ENCODE measurements at regions of chr6 and their contacts with region 1.

Region 1: DNA sequence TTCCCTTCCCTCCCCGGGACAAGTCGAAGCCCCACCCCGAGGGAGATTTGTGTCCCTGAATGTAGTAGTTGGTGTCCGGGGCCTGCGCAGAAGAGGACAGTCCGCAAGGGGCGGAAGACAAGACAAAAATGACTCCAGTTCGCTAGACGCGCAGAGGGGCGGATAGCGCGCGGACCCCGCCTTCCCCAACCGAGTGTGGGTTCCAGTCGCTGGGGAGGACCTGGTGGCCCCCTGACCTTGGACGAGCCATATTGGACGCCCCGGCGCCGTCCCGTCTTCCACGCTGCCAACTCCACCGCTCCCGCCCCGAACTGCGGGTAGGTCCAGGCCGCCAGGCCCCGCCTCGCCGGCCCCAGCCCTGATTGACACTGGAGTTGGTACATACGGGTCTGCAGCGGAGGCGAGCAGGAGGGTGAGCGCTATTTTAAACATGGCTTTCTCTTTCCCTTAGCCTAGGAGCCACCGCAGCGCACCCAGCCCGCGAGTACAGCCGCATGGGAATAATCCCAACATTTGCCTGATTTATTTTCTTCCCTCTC is 802 bp downstream of the HMGN3 start:
- DNase-seq: peak; percentile 93
- ATAC-seq: peak; percentile 95

Region 2: DNA sequence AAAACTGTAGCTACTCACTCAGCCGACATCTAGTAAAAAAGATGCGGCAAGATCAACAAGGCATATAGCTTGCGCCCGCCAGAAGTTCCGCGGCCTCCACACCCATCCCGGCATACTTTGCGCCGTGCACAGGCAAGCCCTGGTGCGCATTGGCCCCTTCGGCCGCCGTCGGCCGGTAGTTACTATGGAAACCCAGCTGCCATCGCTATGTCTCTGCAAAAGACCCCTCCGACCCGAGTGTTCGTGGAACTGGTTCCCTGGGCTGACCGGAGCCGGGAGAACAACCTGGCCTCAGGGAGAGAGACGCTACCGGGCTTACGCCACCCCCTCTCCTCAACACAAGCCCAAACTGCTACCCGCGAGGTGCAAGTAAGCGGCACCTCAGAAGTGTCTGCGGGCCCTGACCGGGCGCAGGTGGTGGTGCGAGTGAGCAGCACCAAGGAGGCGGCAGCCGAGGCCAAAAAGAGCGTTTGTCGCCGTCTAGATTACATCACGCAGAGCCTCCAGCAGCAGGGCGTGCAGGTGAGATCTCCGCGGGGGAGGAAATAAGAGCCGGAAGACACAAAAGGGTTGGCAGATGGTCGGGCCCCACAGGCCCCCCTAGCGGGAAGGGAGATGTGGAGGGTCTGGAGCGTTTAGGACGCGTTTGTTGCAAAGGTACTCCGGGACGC is 366.2 kb before region 1 on chr6 and contains the start of gene IRAK1BP1:
- intact Hi-C with region 1: loop called (anchors 10 kb)
- DNase-seq: peak; percentile 89
- ATAC-seq: peak; percentile 99
- total RNA-seq, gene IRAK1BP1: 3.5 TPM

Region 3: GRCh38 chr6:78936515-78936914 is 297.2 kb before region 1 on chr6:
- intact Hi-C with region 1: loop called (anchors 10 kb)
- DNase-seq: no peak
- ATAC-seq: peak; percentile 76

Region 4: DNA sequence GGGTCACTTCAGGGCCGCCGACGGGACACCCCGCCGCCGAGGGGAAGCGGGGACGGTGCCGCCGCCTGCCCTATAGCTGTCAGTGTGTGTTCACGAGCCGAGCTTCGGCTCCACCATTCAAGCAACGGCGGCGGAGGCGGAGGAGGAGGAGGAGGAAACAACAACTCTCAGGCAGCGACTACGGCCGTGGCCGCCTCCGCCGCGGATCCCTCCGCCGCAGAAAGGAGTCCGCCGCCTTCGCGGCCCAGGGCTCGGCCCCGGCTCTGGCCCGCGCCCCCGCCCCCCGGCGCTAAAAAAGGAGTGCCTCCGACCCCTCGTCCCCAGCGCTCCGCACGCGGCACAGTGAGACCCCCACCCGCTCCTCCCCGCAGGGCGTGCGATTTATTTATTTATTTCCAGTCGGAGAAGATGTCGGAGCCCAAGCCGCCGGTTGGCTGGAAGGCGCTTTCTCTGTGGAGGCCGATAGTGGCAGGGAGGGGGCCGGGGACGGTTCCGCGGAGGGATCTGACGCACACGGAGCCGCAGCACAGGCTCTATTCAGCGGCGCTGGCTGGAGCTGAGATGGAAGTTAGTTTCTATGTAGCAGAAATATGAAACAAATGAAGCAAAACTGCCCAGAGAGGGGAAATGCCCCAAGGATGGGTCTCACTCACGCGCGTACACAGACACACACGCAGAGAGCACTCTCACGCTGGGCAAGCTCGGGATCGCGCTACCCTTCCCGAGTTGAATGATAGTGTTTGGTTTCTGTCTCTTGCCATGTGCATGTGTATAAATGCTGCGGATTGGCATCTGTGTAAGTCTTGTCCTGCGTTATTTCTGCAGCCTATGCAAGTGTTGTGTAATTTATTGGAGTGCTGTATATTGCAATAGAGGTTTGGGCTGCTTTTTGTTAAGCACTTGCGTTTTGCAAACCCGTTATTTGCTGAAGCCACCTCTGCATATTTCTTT is 155.3 kb before region 1 on chr6 and contains the start of gene PHIP:
- intact Hi-C with region 1: loop called (anchors 1 kb)
- DNase-seq: peak; percentile 97
- ATAC-seq: peak; percentile 95
- total RNA-seq, gene PHIP: 13.8 TPM

Region 5: DNA sequence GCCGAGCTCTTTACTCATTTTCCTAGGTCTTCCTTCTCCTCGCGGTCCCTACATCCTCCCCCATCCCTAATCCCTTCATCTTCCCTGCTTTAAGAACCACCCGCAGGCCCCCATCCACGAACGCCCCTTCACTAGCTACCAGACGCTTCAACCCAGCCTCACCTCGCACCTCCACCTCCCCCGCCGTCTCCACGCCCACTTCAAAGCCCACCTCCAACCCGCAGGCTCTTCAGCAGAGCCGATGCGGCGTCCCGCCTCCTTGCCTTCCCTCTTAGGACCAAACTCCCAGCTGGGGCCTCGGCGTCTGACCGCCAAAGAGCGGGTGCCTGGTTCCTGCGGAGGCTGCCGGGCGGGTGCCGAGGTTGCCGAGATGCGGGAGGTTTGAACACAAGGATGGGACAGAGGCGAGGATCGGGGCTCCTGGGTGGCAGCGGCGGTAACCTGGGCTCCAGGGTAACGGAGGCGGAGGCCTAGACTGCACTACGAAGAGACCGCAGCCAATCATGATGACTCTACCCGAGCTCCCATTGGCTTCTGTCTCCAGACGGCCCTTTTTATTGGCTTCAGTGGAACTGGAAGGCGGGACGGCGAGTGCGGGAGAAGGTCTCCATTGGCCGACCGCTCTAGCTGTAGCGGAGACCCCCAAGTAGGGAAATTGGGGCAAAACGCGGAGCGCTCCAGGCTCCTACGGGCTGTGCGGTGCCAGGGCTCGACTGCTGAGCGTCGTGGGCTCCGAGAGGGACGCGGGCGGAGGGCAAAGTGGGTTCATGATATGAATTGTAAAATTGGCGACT is 303.5 kb after region 1 on chr6 and contains the start of gene LCA5:
- intact Hi-C with region 1: loop called (anchors 5 kb)
- DNase-seq: peak; percentile 92
- ATAC-seq: peak; percentile 99
- total RNA-seq, gene LCA5: 2.2 TPM